ENCODE measurements at regions of chr20 and their contacts with region 1.

Region 1: DNA sequence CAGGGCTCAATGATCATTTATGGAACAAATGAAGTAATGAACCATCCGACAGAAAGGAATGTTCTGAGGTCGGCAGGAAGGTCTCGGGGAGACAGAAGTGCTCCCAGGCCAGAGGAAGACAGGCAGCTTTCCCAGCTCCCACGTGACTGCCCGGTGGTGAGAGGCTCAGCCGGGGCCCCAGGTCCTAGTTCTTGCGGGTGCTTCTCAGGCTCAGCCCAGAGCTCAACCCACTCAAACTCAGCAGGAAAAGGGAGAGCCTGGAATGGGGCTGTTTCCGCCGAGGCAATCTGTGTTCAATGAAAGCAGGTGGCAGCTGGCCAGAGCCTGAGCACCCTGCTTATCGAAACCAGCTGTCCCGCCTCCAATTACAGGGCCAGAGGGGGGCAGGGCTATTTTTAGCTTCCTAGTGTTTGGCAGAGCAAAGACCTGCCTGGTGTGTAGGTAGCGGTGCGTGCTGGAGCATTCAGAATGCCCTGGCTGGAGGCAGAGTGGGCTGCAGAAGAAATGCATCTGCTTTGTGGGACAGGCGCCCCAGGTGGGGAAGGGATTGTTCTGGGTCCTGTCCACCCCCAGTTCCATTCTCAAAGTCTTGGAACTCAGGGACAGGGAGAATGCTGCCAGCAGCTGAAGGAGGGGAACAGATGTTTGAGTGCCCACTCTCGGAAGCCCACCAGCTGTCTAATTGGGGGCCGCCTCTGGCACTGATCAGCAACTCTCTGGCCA is 145.1 kb downstream of the PREX1 start:
- DNase-seq: peak in 1 of 2 donors; percentile 92
- H3K4me3 ChIP-seq: peak overlapping the region; percentile 14 to 43
- H3K27ac ChIP-seq: peak overlapping the region; percentile 61 to 77
- H3K4me1 ChIP-seq: peaks cover 24 to 47% of the 10 kb centered on the region in 2 donors
- H3K27me3 ChIP-seq: no peaks in the 10 kb centered on the region
- CTCF ChIP-seq: no peak

Region 2: GRCh38 chr20:48411141-48411618 is 271.5 kb before region 1 on chr20:
- intact Hi-C with region 1: no loop called
- DNase-seq: no peak
- H3K4me3 ChIP-seq: no peak overlapping the region
- H3K27ac ChIP-seq: no peak overlapping the region
- H3K4me1 ChIP-seq: no peaks in the 10 kb centered on the region
- H3K27me3 ChIP-seq: no peaks in the 10 kb centered on the region
- CTCF ChIP-seq: no peak

Region 3: DNA sequence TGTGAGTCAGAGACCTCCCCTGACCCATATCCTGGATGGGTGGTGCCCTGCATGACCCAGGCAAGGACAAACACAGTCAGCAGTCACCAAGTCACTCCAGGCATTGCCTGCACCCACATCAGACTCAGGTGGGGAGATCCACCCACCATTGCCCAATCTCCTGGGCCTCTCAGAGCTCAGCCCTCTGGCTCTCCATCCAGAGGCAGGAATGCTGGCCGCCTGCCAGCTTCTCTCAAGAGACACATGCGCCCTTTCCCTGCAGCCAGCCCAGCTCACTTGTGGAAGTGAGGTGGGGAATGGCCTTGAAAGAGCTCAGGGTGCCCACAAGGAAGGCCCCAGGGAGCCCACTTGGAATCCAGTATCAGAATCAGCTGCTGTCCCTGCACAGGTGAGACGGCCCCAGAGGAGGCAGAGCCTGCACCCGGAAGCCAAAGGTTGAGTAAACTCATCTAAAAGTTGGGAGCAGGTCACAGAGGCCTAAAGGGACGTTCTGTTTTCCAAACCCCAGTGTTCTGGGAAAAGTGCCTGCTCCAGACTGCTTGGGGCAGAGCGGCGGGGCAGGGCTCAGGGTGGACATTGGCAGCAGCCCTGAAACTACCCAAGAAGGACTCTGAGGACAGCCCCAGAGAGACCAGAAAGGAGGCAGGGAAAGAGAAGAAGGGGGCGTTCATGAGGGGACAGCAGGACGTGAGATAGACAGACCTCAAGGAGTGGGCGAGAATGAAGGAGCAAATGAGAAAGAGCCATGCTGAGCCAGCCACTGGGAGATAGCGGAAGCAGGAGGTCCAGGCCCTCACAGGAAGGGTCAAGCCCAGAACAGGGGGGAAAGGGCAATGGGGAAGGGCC is 15.4 kb after region 1 on chr20:
- intact Hi-C with region 1: loop called (anchors 2 kb)
- DNase-seq: peak; percentile 59 to 95
- H3K4me3 ChIP-seq: no peak overlapping the region
- H3K27ac ChIP-seq: peak overlapping the region; percentile 86 to 91
- H3K4me1 ChIP-seq: peaks cover 6 to 35% of the 10 kb centered on the region in 2 donors
- H3K27me3 ChIP-seq: no peaks in the 10 kb centered on the region
- CTCF ChIP-seq: no peak

Region 4: GRCh38 chr20:48807661-48808427 is 125.2 kb after region 1 on chr20:
- intact Hi-C with region 1: loop called (anchors 5 kb)
- DNase-seq: peak in 1 of 2 donors; percentile 83
- H3K4me3 ChIP-seq: peak overlapping the region in 1 of 2 donors; percentile 40
- H3K27ac ChIP-seq: peak overlapping the region; percentile 70 to 72
- H3K4me1 ChIP-seq: peaks cover 7 to 28% of the 10 kb centered on the region in 2 donors
- H3K27me3 ChIP-seq: no peaks in the 10 kb centered on the region
- CTCF ChIP-seq: no peak

Measured in ascending aorta (tissue), 2 donors.